PC-9 (cell line): ENCODE measurements at regions of chr17 and their contacts with region 1.

Region 1: DNA sequence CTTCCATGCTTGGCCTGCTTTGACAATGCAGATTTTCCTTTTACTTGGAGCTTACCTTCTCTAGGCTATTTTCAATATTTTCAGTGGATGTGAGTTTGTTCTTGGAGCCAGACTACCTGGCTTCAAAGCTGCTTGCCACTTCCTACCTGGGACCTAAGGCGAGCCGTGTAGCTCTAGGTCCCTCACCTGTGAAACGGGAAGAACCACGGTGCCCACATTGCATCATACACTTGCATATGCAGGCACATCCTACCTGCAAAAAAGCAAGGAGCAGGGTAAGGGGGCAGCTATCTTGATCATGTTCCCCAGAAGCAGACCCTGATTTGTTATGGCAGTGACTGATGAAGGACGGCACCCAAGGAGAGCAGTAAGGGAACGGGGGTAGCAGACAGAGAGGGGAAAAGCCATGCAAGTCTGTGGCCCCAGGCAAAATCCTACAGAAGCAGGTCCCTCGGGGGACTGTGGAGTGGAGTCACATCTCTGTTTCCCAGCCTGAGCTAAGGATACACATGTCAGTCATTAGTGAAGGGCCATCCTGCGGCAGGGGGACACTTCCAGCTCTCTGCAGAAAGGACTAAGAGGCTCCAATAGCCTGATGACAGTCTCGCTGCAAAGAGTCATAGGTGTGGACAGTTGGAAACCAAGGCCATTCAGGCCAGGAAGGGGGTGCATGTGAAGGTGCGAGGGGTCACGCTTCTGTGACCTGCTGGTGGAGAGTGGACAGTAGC is 26.9 kb upstream of the MPRIP start:
- DNase-seq: peak in 1 of 2 experiments; percentile 57
- H3K4me3 ChIP-seq: peak overlapping the region; percentile 39; the same call in 1 of the 2 replicates
- H3K27ac ChIP-seq: peak overlapping the region; percentile 98
- H3K4me1 ChIP-seq: peaks cover 77% of the 10 kb centered on the region
- H3K27me3 ChIP-seq: no peaks in the 10 kb centered on the region
- CTCF ChIP-seq: no peak

Region 2: DNA sequence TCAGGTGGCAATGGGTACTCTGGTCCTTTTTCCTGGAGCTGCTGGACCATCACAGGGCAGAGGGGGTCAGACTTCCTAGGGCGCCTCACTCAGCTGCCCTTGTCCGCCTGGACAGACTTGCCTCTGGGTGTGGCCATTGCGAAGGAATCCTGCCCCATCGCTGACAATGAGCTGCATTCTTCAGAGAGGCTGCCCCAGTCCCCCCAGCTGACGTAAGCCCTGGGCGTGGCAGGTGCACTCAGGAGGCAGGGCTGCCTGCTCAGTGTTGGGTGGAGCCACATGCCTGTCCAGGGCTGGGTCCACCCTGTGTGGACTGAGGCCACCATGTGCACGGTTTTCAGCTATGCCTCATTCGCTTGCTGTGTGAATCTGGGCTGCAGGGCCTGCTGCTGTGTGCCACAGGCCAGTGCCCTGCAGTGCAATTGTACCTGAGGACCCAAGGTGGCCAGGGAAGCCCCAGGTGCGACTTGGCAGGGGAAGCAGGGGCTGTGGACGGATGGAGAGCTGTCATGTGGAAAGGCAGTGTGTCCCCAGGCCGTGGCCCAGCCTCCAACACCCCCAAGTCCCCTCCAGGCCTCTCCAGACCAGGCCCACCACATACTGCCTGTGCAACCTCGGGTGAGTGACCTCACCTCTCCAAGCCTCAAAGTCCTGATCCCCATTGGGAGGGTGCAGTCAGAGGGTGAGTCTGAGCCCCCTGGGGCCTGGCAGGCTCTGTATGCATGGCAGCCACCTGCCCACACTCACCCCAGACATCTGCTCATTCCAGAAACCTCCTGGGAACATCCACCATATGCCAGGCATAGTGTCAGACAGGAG is 12.9 kb after region 1 on chr17:
- CTCF ChIA-PET with region 1: interaction called, 6 read pairs
- POLR2A ChIA-PET with region 1: interaction called, 17 read pairs
- intact Hi-C with region 1: loop called (anchors 1 kb)
- DNase-seq: peak; percentile 99 to 100
- H3K4me3 ChIP-seq: peak overlapping the region; percentile 5; the same call in 1 of the 2 replicates
- H3K27ac ChIP-seq: peak overlapping the region; percentile 88
- H3K4me1 ChIP-seq: peaks cover 68% of the 10 kb centered on the region
- H3K27me3 ChIP-seq: no peaks in the 10 kb centered on the region
- CTCF ChIP-seq: no peak; the same call in 1 of the 2 replicates

Region 3: DNA sequence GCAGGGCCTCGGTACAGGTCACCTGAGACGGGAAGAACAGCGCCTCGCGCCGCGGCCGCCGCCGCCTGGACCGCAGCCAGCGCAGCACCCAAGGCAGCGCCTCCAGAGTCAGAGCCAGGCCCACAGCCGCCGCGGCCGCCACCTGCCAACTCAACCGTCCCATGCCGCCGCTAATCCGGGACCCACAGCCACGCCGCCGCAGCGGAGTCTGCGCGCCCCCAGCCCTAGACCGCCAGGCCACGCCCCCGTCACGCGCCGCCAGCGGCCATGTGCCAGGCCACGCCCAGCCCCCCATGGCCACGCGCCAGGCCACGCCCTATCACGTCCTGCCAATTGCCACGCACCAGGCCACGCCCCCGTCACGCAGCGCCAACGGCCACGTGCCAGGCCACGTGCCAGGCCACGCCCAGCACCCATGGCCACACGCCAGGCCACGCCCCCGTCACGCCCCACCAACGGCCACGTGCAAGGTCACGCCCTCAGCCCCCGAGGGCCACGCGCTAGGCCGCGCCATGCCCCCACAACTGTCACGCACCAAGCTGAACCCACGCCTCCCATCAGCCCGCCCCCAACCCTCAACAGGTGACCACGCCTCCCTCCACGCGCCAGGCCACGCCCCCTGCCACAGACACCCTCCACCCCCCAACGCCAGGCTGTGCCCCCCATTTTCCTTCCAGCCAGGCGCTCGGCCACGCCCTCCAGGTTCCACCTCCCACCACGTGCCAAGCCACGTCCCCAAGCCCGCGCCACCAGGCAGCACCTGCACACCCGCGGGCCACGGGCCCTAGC is 190.9 kb after region 1 on chr17 and contains the start of gene PLD6:
- CTCF ChIA-PET with region 1: no interaction called
- POLR2A ChIA-PET with region 1: interaction called, 11 read pairs
- intact Hi-C with region 1: no loop called
- DNase-seq: peak; percentile 61 to 91
- H3K4me3 ChIP-seq: peak within 1 kb of the TSS; percentile 91
- H3K27ac ChIP-seq: peak within 1 kb of the TSS; percentile 8
- H3K4me1 ChIP-seq: peaks cover 14% of the 10 kb centered on the region
- H3K27me3 ChIP-seq: no peaks in the 10 kb centered on the region
- CTCF ChIP-seq: no peak
- total RNA-seq, gene PLD6: 4.1 and 5.0 TPM in 2 replicates